ENCODE measurements at regions of chr2 and their contacts with region 1.

Region 1: GRCh38 chr2:160241251-160242137 is 41.4 kb upstream of the ITGB6 start:
- DNase-seq: peak; percentile 95
- H3K4me3 ChIP-seq: no peak overlapping the region
- H3K27ac ChIP-seq: peak overlapping the region; percentile 82
- H3K4me1 ChIP-seq: peaks cover 33% of the 10 kb centered on the region
- H3K27me3 ChIP-seq: no peaks in the 10 kb centered on the region
- CTCF ChIP-seq: no peak
- POLR2A ChIP-seq: no peak

Region 2: DNA sequence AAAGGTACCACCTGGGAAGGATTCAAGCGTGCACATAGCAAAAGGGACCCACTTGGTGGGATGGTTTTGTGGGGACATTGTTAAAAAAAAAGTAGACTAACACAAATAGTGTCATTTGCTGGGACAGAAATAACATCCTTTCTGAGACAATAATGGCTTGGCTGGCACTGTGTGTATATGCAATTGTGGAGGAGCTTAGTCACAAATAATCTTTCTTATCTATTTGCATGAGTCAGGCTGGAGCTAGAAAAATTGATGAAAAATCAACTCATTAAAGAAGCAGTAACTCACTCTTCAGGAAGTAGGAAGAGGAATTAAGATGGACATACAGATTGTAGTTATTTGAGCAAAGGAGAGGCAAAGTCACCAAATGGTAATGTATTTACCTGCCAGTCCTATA is 11.9 kb before region 1 on chr2:
- CTCF ChIA-PET with region 1: interaction called, 15 read pairs
- POLR2A ChIA-PET with region 1: no interaction called
- dilution Hi-C with region 1: no loop called
- intact Hi-C with region 1: loop called (anchors 1 kb)
- DNase-seq: peak; percentile 84
- H3K4me3 ChIP-seq: no peak overlapping the region
- H3K27ac ChIP-seq: peak overlapping the region; percentile 95
- H3K4me1 ChIP-seq: peaks cover 59% of the 10 kb centered on the region
- H3K27me3 ChIP-seq: no peaks in the 10 kb centered on the region
- CTCF ChIP-seq: no peak
- POLR2A ChIP-seq: peak; percentile 43

Region 3: GRCh38 chr2:160613466-160614153 is 372.1 kb after region 1 on chr2:
- CTCF ChIA-PET with region 1: no interaction called
- POLR2A ChIA-PET with region 1: no interaction called
- dilution Hi-C with region 1: no loop called
- intact Hi-C with region 1: no loop called
- DNase-seq: peak; percentile 34
- H3K4me3 ChIP-seq: no peak overlapping the region
- H3K27ac ChIP-seq: no peak overlapping the region
- H3K4me1 ChIP-seq: peaks cover 17% of the 10 kb centered on the region
- H3K27me3 ChIP-seq: no peaks in the 10 kb centered on the region
- CTCF ChIP-seq: no peak
- POLR2A ChIP-seq: no peak

Measured in endothelial cell of umbilical vein (primary cell).